MCF 10A (cell line): ENCODE measurements at regions of chr1 and their contacts with region 1.

Region 1: DNA sequence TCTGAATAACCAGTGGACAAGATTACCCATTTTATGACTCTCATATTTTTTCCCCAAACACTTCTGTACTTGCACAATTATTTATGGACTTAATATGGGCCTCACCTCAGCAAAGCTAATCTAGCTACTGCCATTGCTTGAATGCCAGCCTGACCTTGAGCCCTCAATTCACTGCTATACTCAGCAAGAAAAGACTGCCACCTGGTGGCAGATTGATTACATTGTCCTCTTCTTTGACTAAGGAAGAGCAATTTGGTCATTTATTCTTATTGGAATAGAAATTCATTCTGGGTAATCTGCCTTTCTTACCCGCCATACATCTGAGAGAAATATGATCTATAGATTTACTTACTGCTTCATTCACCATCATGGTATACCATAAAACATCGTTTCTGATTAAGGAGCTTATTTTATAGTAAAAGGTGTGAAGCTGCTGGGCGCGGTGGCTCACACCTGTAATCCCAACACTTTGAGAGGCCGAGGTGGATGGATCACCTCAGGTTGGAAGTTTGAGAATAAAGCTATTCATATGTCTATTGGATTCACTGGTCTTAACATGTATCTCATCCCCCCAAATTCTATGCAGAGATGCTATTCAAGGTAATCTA is 32.9 kb upstream of the DIPK1A start:
- DNase-seq: peak; percentile 85
- H3K4me3 Mint-ChIP-seq: no peak overlapping the region
- H3K27ac Mint-ChIP-seq: no peak overlapping the region
- H3K4me1 Mint-ChIP-seq: peaks cover 5% of the 10 kb centered on the region
- H3K27me3 Mint-ChIP-seq: no peaks in the 10 kb centered on the region
- CTCF ChIP-seq: peak; percentile 71

Region 2: DNA sequence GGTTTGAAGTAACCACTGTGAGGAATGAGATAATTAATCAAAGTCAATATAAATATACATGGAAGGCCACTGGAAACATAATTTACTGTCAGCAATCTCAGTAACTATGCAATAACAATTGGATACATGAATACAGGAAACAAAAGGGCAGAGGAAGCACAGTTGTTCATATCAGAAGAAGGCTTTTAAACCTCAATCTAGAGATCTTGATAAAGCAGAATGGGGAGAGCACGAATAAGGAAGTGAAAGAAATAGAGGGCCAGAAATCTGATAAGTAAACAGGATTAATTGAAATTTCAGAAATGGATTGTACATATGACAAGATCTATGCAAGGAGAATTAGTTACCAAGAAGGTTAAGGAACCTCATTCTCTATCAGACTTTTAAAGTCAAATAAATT is 302.3 kb before region 1 on chr1:
- CTCF ChIA-PET with region 1: no interaction called
- POLR2A ChIA-PET with region 1: no interaction called
- intact Hi-C with region 1: no loop called
- DNase-seq: no peak
- H3K4me3 Mint-ChIP-seq: no peak overlapping the region
- H3K27ac Mint-ChIP-seq: no peak overlapping the region
- H3K4me1 Mint-ChIP-seq: no peaks in the 10 kb centered on the region
- H3K27me3 Mint-ChIP-seq: no peaks in the 10 kb centered on the region
- CTCF ChIP-seq: no peak

Region 3: DNA sequence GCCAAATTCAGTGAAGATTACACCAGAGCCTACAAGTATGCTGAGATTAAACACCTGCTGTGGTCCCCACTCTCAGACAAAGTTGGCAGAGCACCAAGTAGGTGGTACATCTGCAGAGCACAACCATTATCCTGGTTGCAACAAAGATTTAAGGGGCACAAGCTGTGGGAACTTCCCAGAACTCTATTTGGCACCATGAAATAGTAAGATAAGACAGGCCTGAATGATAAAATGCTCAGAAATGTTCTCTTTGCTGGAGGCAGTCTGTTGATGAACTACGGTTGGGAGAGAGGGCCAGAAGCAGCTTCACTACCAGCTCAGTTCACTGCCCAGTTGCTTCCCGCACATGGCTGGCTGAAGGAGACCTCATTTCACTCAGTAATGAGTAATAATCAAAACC is 142.5 kb before region 1 on chr1:
- CTCF ChIA-PET with region 1: interaction called, 150 read pairs
- POLR2A ChIA-PET with region 1: interaction called, 3 read pairs
- intact Hi-C with region 1: no loop called
- DNase-seq: no peak
- H3K4me3 Mint-ChIP-seq: no peak overlapping the region
- H3K27ac Mint-ChIP-seq: no peak overlapping the region
- H3K4me1 Mint-ChIP-seq: peaks cover 6% of the 10 kb centered on the region
- H3K27me3 Mint-ChIP-seq: no peaks in the 10 kb centered on the region
- CTCF ChIP-seq: no peak

Region 4: DNA sequence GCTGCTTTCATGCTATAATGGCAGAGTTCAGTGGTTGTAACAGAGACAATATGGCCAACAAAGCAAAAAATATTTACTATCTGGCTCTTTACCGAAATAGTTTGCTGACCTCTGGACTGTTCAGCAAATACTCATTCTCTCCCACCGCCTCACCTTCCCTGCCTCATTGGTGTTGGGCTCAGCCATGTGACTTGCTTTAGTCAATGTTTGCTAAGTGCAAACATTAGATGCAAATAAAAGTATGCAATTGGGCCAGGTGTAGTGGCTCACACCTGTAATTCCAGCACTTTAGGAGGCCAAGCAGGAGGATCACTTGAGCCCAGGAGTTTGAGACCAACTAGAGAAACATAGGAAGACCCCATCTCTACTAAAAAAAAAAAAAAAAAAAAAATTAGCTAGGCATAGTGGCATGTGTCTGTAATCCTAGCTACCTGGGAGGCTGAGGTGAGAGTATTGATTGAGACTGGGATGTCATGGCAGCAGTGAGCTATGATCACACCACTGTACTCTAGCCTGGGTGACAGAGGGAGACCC is 107.3 kb before region 1 on chr1:
- CTCF ChIA-PET with region 1: interaction called, 10 read pairs
- POLR2A ChIA-PET with region 1: no interaction called
- intact Hi-C with region 1: no loop called
- DNase-seq: no peak
- H3K4me3 Mint-ChIP-seq: no peak overlapping the region
- H3K27ac Mint-ChIP-seq: no peak overlapping the region
- H3K4me1 Mint-ChIP-seq: no peaks in the 10 kb centered on the region
- H3K27me3 Mint-ChIP-seq: no peaks in the 10 kb centered on the region
- CTCF ChIP-seq: no peak

Region 5: GRCh38 chr1:92975551-92976232 is 18.5 kb before region 1 on chr1:
- CTCF ChIA-PET with region 1: interaction called, 93 read pairs
- POLR2A ChIA-PET with region 1: no interaction called
- intact Hi-C with region 1: no loop called
- DNase-seq: no peak
- H3K4me3 Mint-ChIP-seq: no peak overlapping the region
- H3K27ac Mint-ChIP-seq: no peak overlapping the region
- H3K4me1 Mint-ChIP-seq: no peaks in the 10 kb centered on the region
- H3K27me3 Mint-ChIP-seq: no peaks in the 10 kb centered on the region
- CTCF ChIP-seq: no peak

Region 6: DNA sequence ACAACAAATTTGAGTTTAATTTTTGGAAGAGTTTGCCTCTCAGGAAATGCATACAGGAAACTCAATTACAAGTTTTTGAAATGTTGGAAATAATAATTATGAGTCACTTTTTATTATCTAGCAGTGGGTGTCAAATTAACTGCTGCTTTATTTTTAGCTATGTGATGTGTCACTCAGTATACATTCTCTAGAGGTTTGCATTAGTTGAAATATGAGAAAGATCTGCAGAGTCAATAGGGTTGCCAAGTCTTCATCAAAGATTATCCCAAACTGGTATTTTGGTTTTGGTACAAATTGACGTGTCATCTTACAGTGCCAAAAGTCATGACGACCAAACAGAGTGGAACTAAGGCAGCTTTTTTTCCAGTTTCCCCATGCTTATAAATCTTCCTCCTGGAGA is 21.4 kb after region 1 on chr1:
- CTCF ChIA-PET with region 1: interaction called, 23 read pairs
- POLR2A ChIA-PET with region 1: no interaction called
- intact Hi-C with region 1: no loop called
- DNase-seq: peak; percentile 53
- H3K4me3 Mint-ChIP-seq: no peak overlapping the region
- H3K27ac Mint-ChIP-seq: no peak overlapping the region
- H3K4me1 Mint-ChIP-seq: peaks cover 13% of the 10 kb centered on the region
- H3K27me3 Mint-ChIP-seq: peaks cover 37% of the 10 kb centered on the region
- CTCF ChIP-seq: no peak